Activated CD4-positive, alpha-beta memory T cell treated with anti-CD3 and anti-CD28 coated beads, Interleukin-2, amount 10 ng/mL, durations not matched to agents 7 days and 5 days (primary cell): ENCODE measurements at regions of chr10 and their contacts with region 1.

Region 1: DNA sequence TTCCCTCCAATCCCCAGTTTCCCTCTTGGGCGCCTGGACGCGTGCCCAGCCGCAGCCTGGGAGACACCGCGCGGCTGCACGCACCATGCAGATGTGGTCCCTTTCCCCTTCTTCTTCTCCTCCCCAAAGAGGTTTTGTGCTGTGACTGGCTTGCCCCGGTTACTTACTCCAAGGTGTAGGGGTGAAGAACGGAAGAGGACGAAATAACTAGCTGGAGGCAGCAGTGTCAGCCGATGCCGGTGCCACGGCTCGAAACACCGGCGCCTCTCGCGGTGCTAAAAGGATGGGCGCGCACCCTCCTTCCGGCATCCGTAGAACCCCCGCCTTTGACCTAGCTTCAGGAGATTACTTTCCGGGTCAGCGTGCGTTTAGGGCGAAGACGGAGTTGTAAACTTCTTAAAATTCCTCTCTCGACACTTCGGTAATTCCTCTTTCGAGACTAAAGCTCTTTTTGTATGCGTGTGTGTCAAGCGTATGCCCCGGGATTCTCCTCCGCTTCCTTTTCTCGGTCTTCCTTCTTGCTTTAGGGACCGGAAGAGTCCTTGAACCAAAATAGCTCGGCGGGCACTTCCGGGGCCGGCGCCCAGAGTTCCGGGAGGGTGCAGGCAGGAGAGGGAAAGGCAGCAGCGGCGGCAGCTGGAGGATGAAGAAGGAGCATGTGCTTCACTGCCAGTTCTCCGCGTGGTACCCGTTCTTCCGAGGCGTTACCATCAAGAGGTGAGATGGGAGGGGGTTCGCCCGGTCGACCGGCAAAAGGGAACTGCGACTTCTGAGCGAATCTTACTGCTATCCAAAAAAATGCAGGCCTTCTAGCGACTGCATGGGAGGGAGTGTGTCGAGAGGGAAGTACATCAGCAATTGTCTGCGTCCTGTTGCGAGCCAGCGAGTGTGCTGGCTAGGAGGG is at the starts of genes CDC123 and NUDT5:
- DNase-seq: peak; percentile 90
- H3K4me3 Mint-ChIP-seq: peak within 1 kb of the TSS; percentile 89
- H3K27ac Mint-ChIP-seq: peak within 1 kb of the TSS; percentile 99
- H3K4me1 Mint-ChIP-seq: peaks cover 64% of the 10 kb centered on the region
- H3K27me3 Mint-ChIP-seq: no peaks in the 10 kb centered on the region
- total RNA-seq, gene CDC123: 89.5 to 95.1 TPM
- total RNA-seq, gene NUDT5: 91.6 to 91.7 TPM

Region 2: DNA sequence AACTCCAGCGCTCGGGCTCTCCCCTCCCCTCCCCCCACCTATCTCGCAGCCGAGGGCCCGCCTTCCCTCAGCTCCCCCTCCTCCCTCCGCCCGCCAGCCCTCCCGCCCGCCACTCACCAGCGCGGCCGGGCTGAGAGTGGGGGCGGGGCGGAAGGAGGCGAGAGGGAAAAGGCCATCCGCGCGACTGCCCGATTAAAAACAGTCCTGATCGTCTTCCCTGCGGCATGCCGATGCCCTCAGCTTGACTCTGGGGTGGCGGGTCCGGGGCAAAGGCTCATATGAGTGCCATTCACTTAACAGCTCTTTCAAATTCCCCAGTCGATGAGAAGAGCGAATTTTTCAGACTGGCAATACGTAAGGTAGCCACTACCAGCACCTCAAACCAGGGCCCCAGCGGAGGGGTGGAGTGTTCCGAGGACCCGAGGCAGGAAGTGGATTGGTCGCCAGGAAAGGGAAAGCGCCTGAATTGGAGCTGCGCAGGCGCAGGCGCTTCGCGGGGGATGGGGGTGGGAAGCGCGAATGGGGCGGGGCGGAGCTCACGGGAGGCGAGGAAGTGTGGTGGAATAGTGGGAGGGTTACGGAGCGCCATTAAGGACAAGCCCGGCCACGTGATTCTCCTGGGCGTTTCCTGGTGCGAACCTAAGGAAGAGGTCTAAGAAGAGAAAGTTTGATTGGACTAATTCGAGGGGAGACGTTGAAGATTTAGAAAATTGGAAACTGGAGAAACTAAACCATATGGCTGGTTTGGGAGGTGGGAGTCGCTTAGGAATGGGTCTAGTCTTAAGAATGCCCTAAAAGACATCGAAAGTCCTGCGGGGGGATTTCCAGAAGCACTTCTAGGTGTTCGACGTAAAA is 152.8 kb before region 1 on chr10 and contains the start of gene UPF2:
- CTCF ChIA-PET with region 1: interaction called, 4 read pairs
- POLR2A ChIA-PET with region 1: interaction called, 20 read pairs
- DNase-seq: peak; percentile 98
- H3K4me3 Mint-ChIP-seq: peak within 1 kb of the TSS; percentile 95
- H3K27ac Mint-ChIP-seq: peak within 1 kb of the TSS; percentile 97
- H3K4me1 Mint-ChIP-seq: peaks cover 43% of the 10 kb centered on the region
- H3K27me3 Mint-ChIP-seq: no peaks in the 10 kb centered on the region
- total RNA-seq, gene UPF2: 26.7 to 28.5 TPM

Region 3: GRCh38 chr10:12181065-12181775 is 14.6 kb before region 1 on chr10:
- CTCF ChIA-PET with region 1: interaction called, 3 read pairs
- POLR2A ChIA-PET with region 1: interaction called, 52 read pairs
- DNase-seq: peak; percentile 87
- H3K4me3 Mint-ChIP-seq: peak overlapping the region; percentile 25
- H3K27ac Mint-ChIP-seq: peak overlapping the region; percentile 98
- H3K4me1 Mint-ChIP-seq: peaks cover 45% of the 10 kb centered on the region
- H3K27me3 Mint-ChIP-seq: no peaks in the 10 kb centered on the region

Region 4: GRCh38 chr10:12208460-12208859 is 12.6 kb after region 1 on chr10:
- CTCF ChIA-PET with region 1: interaction called, 22 read pairs
- POLR2A ChIA-PET with region 1: interaction called, 10 read pairs
- DNase-seq: no peak
- H3K4me3 Mint-ChIP-seq: no peak overlapping the region
- H3K27ac Mint-ChIP-seq: no peak overlapping the region
- H3K4me1 Mint-ChIP-seq: peaks cover 13% of the 10 kb centered on the region
- H3K27me3 Mint-ChIP-seq: no peaks in the 10 kb centered on the region